CD14-positive monocyte (primary cell): ENCODE measurements at regions of chr2 and their contacts with region 1.

Region 1: DNA sequence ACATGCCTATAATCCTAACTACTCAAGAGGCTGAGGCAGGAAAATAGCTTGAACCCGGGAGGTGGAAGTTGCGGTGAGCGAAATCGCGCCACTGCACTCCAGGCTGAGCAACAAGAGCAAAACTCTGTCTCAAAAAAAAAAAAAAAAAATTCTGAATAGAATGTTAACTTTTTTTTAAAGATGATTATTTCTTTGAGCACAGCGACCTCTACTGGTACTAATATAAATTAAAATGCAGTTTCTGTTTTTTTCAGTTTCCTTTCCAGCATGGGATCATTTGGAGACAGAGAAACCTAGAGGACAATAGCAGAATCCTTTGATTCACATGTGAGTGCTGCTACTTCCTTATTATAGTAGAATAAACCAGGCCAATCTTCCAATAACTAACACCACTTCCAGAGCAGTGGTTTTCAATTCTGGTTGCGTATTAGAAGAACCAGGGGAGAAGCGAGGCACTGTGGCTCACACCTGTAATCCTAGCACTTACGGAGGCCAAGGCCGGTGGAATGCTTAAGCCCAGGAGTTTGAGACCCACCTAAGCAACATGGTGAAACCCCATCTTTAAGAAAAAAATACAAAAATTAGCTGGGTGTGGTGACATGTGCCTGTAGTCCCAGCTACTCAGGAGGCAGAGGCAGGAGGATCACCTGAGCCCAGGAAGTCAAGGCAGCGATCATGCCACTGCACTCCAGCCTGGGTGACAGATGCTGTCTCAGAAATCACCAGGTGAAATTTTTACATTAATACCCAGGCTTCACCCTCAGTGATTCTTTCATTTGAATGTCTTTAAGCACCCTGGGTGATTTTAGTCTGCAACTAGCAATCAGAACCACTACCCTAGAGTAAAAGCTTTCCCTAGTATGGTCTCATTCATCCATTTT is 10.1 kb downstream of the SRSF7 start:
- DNase-seq: peak; percentile 40 to 59 (median 46)
- H3K4me3 ChIP-seq: no peak overlapping the region
- H3K4me3 Mint-ChIP-seq: no peak overlapping the region
- H3K27ac ChIP-seq: peak overlapping the region in 1 of 2 donors; percentile 13
- H3K27ac Mint-ChIP-seq: peak overlapping the region in 6 of 7 donors; percentile 8 to 64 (median 37)
- H3K4me1 ChIP-seq: peaks cover 16 to 21% of the 10 kb centered on the region in 2 donors
- H3K4me1 Mint-ChIP-seq: peaks cover 35% of the 10 kb centered on the region
- H3K27me3 ChIP-seq: no peaks in the 10 kb centered on the region
- H3K27me3 Mint-ChIP-seq: peaks cover 0 to 2% (median 0%) of the 10 kb centered on the region in 3 donors
- CTCF ChIP-seq: peak; percentile 72

Region 2: DNA sequence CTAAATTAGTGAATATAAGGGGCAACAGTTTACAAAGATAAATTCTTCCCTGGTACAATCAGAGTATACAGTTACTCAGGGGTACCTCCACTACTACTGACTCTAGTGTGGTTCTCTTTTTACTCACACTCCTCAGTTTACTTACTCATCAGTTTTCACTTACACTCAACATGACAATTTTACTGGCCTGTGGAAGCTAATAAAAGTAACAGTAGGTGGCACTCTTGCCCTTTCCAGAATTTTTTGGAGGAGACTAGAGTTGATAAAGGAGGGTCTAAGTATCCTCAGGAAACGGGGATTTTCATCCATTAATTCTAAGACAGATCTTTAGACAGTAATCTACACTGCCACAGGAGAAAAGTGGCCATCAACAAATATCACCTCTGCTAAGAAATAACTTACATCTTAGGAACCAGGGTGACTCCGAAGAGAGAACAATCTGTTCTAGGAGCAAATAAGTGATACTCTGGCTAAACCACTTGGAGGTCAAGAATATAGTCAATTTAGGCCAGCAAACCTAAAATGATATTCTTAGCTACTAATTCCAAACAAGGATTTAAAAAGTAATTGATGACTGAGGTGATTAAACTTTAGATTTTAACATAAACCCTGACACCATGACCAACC is 425.3 kb before region 1 on chr2:
- intact Hi-C with region 1: loop called (anchors 5 to 10 kb)
- DNase-seq: peak; percentile 19 to 54 (median 48)
- H3K4me3 ChIP-seq: no peak overlapping the region
- H3K4me3 Mint-ChIP-seq: no peak overlapping the region
- H3K27ac ChIP-seq: peak overlapping the region in 1 of 2 donors; percentile 13
- H3K27ac Mint-ChIP-seq: no peak overlapping the region
- H3K4me1 ChIP-seq: no peaks in the 10 kb centered on the region
- H3K4me1 Mint-ChIP-seq: no peaks in the 10 kb centered on the region
- H3K27me3 ChIP-seq: no peaks in the 10 kb centered on the region
- H3K27me3 Mint-ChIP-seq: no peaks in the 10 kb centered on the region
- CTCF ChIP-seq: peak; percentile 85

Region 3: DNA sequence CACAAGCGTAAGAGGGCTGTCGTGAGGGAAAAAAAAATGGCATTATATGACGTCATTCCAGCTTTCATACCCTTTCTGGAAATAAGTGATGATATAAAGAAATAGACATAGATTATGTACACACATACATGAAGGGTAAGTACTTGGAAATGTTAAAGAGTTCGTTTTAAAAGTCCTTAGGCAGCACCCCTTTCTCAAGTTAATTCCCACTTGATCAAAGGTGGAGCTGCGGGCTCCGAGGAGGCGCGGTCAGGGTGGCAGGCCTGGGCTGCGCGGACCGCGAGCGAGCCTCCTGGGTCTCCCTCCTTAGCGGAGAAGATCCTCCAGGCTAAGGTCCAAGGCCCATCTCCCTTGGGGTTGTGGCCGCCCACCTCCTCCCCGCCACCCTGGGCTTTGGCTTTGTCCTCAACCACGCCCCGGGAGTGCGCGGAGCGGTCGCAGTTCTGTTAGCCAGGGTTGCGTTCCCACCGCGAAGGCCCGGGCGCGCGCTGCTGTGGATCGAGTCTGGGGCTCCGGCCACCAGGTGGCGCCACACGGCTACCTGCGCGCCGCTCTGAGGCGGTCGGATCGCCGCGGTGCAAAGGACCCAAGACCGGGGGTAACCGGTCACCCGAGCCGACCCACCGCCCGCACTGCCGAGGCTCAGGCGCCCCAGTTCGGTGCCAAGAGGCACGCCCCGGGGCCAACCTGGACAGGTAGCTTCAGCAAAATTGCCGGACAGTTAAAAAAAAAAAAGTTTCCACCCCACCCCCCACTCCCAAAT is 205.2 kb before region 1 on chr2:
- intact Hi-C with region 1: loop called in 1 of 2 experiments (anchors 2 kb)
- DNase-seq: peak; percentile 57 to 67 (median 64)
- H3K4me3 ChIP-seq: peak overlapping the region; percentile 19 to 75 (median 42)
- H3K4me3 Mint-ChIP-seq: peak overlapping the region; percentile 73 to 86
- H3K27ac ChIP-seq: peak overlapping the region in 1 of 2 donors; percentile 36
- H3K27ac Mint-ChIP-seq: no peak overlapping the region
- H3K4me1 ChIP-seq: peaks cover 19 to 20% of the 10 kb centered on the region in 2 donors
- H3K4me1 Mint-ChIP-seq: peaks cover 14% of the 10 kb centered on the region
- H3K27me3 ChIP-seq: peaks cover 3 to 12% of the 10 kb centered on the region in 2 donors
- H3K27me3 Mint-ChIP-seq: peaks cover 12 to 39% (median 18%) of the 10 kb centered on the region in 3 donors
- CTCF ChIP-seq: peak; percentile 96

Region 4: DNA sequence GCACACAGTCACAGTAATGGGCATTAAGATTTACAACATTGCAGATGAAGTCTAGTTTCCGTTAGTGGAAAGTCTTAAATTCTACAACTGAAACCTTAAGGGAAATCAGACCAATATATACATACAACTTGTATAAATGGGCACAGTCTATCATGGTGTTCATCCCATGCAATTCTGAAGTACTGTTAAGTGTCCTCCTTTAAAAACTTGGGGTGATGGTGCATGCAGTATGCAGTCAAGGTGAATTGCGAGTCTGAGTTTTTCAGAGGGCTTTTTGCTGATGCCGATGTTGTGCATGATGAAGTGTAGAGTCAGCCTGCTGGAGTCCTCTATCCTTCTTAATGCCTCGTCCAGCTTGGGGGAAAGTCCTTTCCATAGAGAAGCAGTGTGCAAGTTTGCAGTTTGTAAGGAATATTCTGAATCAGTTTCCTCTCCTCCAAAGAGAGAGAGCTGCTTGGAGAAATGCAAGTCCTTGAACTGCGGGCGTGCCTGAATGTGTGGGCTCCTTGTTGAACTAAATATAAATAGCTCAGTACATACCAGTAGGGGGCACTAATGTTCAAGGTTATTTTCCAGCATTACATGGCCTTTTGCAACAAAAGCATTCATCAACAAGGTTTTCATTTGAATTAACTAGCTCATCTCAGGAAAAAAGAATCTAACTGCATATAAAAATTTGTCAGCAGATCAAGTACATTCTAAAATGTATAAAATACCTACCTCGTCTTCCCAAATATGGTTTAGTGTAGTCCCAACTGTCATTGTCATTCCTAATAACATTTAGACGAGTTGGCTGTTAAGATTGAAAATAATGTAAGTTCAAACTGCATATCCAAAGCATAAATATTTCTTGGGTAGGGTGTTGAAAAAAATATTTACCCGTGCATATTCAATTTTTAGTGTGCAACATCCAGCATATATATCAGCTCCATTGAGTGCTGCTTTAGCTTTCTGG is 159.6 kb before region 1 on chr2:
- intact Hi-C with region 1: loop called (anchors 5 kb)
- DNase-seq: peak; percentile 53 to 77 (median 64)
- H3K4me3 ChIP-seq: no peak overlapping the region
- H3K4me3 Mint-ChIP-seq: no peak overlapping the region
- H3K27ac ChIP-seq: no peak overlapping the region
- H3K27ac Mint-ChIP-seq: no peak overlapping the region
- H3K4me1 ChIP-seq: no peaks in the 10 kb centered on the region
- H3K4me1 Mint-ChIP-seq: no peaks in the 10 kb centered on the region
- H3K27me3 ChIP-seq: no peaks in the 10 kb centered on the region
- H3K27me3 Mint-ChIP-seq: no peaks in the 10 kb centered on the region
- CTCF ChIP-seq: peak; percentile 82

Region 5: DNA sequence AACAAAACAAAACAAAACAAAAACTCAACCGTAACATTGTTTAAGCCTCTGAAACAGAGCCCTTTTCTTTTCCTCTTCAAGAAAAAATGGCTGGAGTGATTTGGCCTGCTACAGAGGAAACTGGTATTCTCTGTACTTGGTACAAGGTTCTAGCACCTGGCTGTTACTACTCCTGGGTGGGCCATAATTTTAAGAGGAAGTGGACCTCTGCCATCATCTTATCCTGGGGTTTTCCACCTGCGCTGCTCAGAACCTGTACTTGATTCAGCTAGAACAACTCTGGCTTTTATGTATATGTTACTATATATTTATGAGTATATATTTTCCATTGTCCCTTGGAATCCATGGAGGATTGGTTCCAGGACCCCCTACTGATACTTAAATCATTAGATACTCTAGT is 12.4 kb before region 1 on chr2:
- intact Hi-C with region 1: loop called in 1 of 2 experiments (anchors 1 kb)
- DNase-seq: no peak
- H3K4me3 ChIP-seq: no peak overlapping the region
- H3K4me3 Mint-ChIP-seq: no peak overlapping the region
- H3K27ac ChIP-seq: no peak overlapping the region
- H3K27ac Mint-ChIP-seq: no peak overlapping the region
- H3K4me1 ChIP-seq: peaks cover 9 to 10% of the 10 kb centered on the region in 2 donors
- H3K4me1 Mint-ChIP-seq: peaks cover 8% of the 10 kb centered on the region
- H3K27me3 ChIP-seq: no peaks in the 10 kb centered on the region
- H3K27me3 Mint-ChIP-seq: peaks cover 0 to 2% (median 2%) of the 10 kb centered on the region in 3 donors
- CTCF ChIP-seq: no peak